ENCODE measurements at regions of chr3 and their contacts with region 1.

Region 1: DNA sequence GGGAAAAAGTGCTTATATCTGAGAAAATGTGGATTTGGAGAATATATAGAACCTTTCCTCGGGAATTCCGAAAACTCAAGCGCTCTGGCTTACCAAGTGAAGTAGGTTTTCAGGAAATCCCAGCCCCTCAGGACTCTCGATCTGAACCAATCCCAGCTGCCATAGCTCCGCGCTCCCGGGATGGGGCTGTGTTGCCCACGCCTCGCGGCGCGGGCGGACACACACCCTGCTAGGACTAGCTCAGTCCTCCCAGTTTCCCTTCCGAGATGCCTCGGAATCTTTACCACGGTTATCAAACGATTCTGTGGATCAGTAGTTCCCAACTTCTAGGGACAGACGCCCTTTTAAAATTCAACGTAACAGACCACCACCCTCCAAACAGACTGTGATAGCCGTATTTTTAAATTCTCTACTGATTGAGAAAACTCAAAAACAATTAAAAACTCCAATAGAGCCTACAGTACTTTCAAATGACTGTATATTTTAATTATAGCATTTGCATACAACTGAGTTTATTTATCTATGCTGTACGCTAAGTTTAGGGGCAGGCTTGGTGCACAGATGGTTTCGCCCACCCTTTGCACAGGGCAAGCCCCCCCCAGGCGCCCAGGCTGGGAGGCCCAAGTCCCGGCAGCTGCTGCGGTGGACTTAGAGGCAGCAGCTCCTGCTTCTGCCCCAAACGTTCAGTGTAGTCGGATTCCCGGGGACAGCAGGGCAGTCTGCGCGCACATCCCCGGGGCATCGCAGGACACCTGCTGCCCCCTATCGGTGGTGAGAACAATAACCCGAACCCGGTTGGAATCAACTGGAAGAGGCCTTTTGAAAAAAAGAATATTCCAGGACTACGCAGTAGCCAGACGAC is 52.3 kb downstream of the CCDC54 start:
- DNase-seq: peak; percentile 63
- H3K4me3 Mint-ChIP-seq: peak overlapping the region; percentile 28
- H3K27ac Mint-ChIP-seq: no peak overlapping the region
- H3K4me1 Mint-ChIP-seq: peaks cover 17% of the 10 kb centered on the region
- H3K27me3 Mint-ChIP-seq: peaks cover 18% of the 10 kb centered on the region

Region 2: GRCh38 chr3:107235928-107236315 is 193.6 kb before region 1 on chr3:
- CTCF ChIA-PET with region 1: interaction called, 11 read pairs
- POLR2A ChIA-PET with region 1: interaction called, 5 read pairs
- DNase-seq: peak; percentile 47
- H3K4me3 Mint-ChIP-seq: peak overlapping the region; percentile 40
- H3K27ac Mint-ChIP-seq: no peak overlapping the region
- H3K4me1 Mint-ChIP-seq: peaks cover 16% of the 10 kb centered on the region
- H3K27me3 Mint-ChIP-seq: peaks cover 10% of the 10 kb centered on the region

Region 3: DNA sequence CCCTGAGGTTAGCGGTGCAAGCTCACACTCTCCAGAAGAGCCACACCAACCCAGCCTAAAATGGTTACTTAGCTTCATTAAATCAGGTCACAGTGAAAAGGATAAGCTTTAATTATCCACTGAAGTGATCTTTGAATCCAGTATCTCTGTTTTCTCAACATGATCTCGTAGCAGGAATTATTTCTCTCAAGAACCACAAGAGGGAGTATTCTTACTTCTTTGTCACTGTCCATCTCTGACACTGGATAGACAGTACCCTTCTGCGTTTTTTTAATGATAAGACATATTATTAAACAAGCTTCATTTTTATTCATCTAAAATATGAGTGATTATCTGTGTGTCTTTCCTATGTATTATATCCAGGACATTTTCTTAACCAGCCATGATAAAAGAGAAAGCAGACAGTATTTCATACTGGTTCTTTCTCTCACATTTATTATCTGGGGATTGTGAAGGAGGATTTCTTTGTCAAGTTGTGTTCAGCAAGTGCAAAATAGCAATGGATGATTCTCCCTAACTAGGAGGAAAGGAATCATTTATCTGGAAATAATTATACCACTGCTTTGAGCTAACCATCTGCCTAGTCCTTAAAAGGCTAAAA is 157.7 kb before region 1 on chr3:
- CTCF ChIA-PET with region 1: interaction called, 16 read pairs
- POLR2A ChIA-PET with region 1: interaction called, 5 read pairs
- DNase-seq: no peak
- H3K4me3 Mint-ChIP-seq: no peak overlapping the region
- H3K27ac Mint-ChIP-seq: no peak overlapping the region
- H3K4me1 Mint-ChIP-seq: no peaks in the 10 kb centered on the region
- H3K27me3 Mint-ChIP-seq: peaks cover 17% of the 10 kb centered on the region

Region 4: DNA sequence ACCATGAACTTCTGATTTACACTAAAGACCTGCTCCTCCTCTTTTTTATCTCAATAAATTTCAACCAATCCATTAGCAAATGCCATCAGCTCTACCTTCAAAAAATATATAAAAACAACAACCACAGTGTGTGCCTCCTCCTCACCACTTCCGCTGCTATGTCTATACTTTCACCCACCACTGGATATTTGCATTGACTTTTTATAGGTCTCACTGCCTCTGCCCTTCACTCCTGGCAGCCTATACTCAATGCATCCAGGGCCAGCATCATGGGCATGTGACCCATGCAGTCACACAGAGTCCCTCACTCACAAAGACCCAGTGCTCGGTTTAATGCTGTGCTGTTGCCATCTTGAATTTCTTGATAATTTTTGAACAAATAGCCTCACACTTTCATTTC is 105.8 kb before region 1 on chr3:
- CTCF ChIA-PET with region 1: no interaction called
- POLR2A ChIA-PET with region 1: no interaction called
- DNase-seq: no peak
- H3K4me3 Mint-ChIP-seq: no peak overlapping the region
- H3K27ac Mint-ChIP-seq: no peak overlapping the region
- H3K4me1 Mint-ChIP-seq: no peaks in the 10 kb centered on the region
- H3K27me3 Mint-ChIP-seq: no peaks in the 10 kb centered on the region

Region 5: DNA sequence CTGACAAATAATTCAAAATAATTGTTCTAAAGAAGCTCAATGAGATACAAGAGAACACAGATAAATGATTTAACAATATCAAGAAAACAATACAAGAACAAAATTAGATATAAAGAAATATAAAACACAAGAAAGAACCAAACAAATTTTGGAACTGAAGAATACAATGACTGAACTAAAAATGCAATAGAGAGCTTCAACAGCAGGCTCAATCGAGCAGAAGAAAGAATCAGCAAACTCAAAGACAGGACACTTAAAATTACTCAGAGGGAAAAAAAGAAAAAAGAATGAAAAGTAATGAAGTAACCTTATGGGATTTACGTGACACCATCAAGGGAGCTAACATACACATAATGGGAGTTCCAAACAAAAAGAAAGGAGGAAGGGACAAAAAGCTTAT is 20.2 kb before region 1 on chr3:
- CTCF ChIA-PET with region 1: interaction called, 11 read pairs
- POLR2A ChIA-PET with region 1: no interaction called
- DNase-seq: no peak
- H3K4me3 Mint-ChIP-seq: no peak overlapping the region
- H3K27ac Mint-ChIP-seq: no peak overlapping the region
- H3K4me1 Mint-ChIP-seq: peaks cover 6% of the 10 kb centered on the region
- H3K27me3 Mint-ChIP-seq: peaks cover 9% of the 10 kb centered on the region